Activated CD4-positive, alpha-beta T cell treated with anti-CD3 and anti-CD28 coated beads, Interleukin-2, amount 10 ng/mL, durations not matched to agents 24 days and 14 days (primary cell): ENCODE measurements at regions of chr1 and their contacts with region 1.

Region 1: GRCh38 chr1:116826818-116827606 is 72.8 kb downstream of the CD2 start:
- DNase-seq: peak; percentile 91
- H3K4me3 Mint-ChIP-seq: peak overlapping the region; percentile 76
- H3K27ac Mint-ChIP-seq: peak overlapping the region; percentile 93
- H3K4me1 Mint-ChIP-seq: peaks cover 59% of the 10 kb centered on the region
- H3K27me3 Mint-ChIP-seq: no peaks in the 10 kb centered on the region

Region 2: GRCh38 chr1:116514708-116515525 is 312.1 kb before region 1 on chr1:
- intact Hi-C with region 1: loop called (anchors 5 kb)
- DNase-seq: peak; percentile 92
- H3K4me3 Mint-ChIP-seq: peak overlapping the region; percentile 76
- H3K27ac Mint-ChIP-seq: peak overlapping the region; percentile 93
- H3K4me1 Mint-ChIP-seq: peaks cover 64% of the 10 kb centered on the region
- H3K27me3 Mint-ChIP-seq: no peaks in the 10 kb centered on the region

Region 3: GRCh38 chr1:116654355-116654754 is 172.7 kb before region 1 on chr1:
- intact Hi-C with region 1: no loop called
- DNase-seq: no peak
- H3K4me3 Mint-ChIP-seq: no peak overlapping the region
- H3K27ac Mint-ChIP-seq: no peak overlapping the region
- H3K4me1 Mint-ChIP-seq: no peaks in the 10 kb centered on the region
- H3K27me3 Mint-ChIP-seq: peaks cover 23% of the 10 kb centered on the region

Region 4: DNA sequence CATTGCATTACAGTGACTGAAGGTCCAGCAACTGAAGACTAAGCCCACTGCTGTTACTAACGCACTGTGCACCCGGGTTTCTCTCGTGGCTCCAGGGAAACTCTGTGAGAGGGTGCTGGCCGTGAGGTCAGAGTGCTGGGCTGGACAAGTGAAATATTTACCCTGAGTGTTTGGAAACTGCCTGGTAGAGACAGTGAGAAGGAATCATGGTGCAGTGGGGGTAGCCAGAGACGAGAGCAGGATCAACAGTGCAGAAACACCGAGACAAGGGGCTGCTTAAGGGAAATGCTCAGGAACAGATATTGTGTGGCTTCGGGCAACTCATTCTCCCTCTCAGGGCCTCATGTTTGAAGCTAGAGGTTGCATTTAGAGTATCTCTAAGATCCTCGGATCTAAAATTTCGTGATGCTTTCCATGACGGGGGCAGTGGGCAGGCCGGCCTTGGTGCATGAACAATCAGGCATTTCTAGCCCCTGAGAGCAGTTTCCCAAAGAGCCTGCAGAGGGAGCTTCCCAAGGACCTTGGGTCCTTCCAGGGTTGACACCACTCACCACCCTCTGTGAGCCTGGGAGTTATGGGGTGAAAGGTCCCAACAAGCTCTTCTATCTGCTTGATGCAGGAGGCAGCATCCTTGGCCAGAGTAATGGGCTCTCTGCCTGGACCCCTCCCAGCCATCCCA is 63.1 kb before region 1 on chr1:
- intact Hi-C with region 1: loop called (anchors 1 kb)
- DNase-seq: peak; percentile 86
- H3K4me3 Mint-ChIP-seq: peak overlapping the region; percentile 98
- H3K27ac Mint-ChIP-seq: peak overlapping the region; percentile 99
- H3K4me1 Mint-ChIP-seq: peaks cover 85% of the 10 kb centered on the region
- H3K27me3 Mint-ChIP-seq: no peaks in the 10 kb centered on the region

Region 5: GRCh38 chr1:116811321-116811720 is 15.7 kb before region 1 on chr1:
- intact Hi-C with region 1: loop called (anchors 2 kb)
- DNase-seq: peak; percentile 55
- H3K4me3 Mint-ChIP-seq: no peak overlapping the region
- H3K27ac Mint-ChIP-seq: peak overlapping the region; percentile 72
- H3K4me1 Mint-ChIP-seq: peaks cover 71% of the 10 kb centered on the region
- H3K27me3 Mint-ChIP-seq: no peaks in the 10 kb centered on the region

Region 6: GRCh38 chr1:116873680-116874271 is 46.8 kb after region 1 on chr1:
- intact Hi-C with region 1: loop called (anchors 1 kb)
- DNase-seq: peak; percentile 68
- H3K4me3 Mint-ChIP-seq: no peak overlapping the region
- H3K27ac Mint-ChIP-seq: peak overlapping the region; percentile 22
- H3K4me1 Mint-ChIP-seq: peaks cover 19% of the 10 kb centered on the region
- H3K27me3 Mint-ChIP-seq: no peaks in the 10 kb centered on the region

Region 7: GRCh38 chr1:116934586-116935207 is 107.7 kb after region 1 on chr1:
- intact Hi-C with region 1: loop called (anchors 2 kb)
- DNase-seq: no peak
- H3K4me3 Mint-ChIP-seq: peak overlapping the region; percentile 36
- H3K27ac Mint-ChIP-seq: peak overlapping the region; percentile 74
- H3K4me1 Mint-ChIP-seq: peaks cover 28% of the 10 kb centered on the region
- H3K27me3 Mint-ChIP-seq: no peaks in the 10 kb centered on the region